CD4-positive, alpha-beta T cell (primary cell): ENCODE measurements at regions of chr1 and their contacts with region 1.

Region 1: GRCh38 chr1:198699167-198700015 is 60.6 kb downstream of the PTPRC start:
- DNase-seq: peak; percentile 54 to 83 (median 68)
- ATAC-seq: peak; percentile 88
- H3K4me3 ChIP-seq: no peak overlapping the region
- H3K4me3 Mint-ChIP-seq: peak overlapping the region; percentile 66
- H3K27ac ChIP-seq: peak overlapping the region in 1 of 2 donors; percentile 46
- H3K27ac Mint-ChIP-seq: peak overlapping the region; percentile 85
- H3K4me1 ChIP-seq: peaks cover 36% of the 10 kb centered on the region
- H3K4me1 Mint-ChIP-seq: peaks cover 88% of the 10 kb centered on the region
- H3K27me3 ChIP-seq: no peaks in the 10 kb centered on the region
- H3K27me3 Mint-ChIP-seq: no peaks in the 10 kb centered on the region
- CTCF ChIP-seq: peak; percentile 70

Region 2: DNA sequence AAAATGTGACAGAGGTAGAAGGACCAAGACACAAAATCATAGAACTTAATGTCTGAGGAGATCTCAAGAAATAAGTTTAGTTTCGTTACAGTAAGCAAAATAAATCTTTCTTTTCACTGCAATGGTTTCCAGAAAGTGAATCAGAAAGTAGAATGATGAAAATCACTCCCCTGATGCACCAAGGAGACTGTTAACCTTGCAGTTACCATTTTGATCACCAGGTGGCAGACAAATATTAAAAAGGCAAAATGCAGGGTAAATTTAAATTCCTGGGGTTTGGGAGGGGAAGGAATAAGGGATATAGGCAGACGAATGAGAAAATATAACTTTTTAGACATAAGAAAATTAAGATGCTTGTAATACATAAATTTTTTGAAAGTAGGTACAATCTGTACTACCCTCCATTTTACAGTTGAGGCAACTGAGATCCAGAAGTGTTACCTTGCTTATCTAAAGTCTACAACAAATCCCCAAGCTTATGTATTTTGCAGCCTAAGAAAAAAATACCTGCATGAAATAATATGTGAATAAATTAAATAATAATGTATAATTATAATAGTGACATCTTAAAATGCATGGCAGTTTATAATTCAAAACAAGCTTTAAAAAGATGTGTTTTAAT is 1178.2 kb before region 1 on chr1:
- CTCF ChIA-PET with region 1: no interaction called
- POLR2A ChIA-PET with region 1: no interaction called
- intact Hi-C with region 1: loop called (anchors 10 kb)
- DNase-seq: peak in 4 of 14 experiments; percentile 5 to 57 (median 50)
- ATAC-seq: peak; percentile 52
- H3K4me3 ChIP-seq: no peak overlapping the region
- H3K4me3 Mint-ChIP-seq: no peak overlapping the region
- H3K27ac ChIP-seq: no peak overlapping the region
- H3K27ac Mint-ChIP-seq: no peak overlapping the region
- H3K4me1 ChIP-seq: no peaks in the 10 kb centered on the region
- H3K4me1 Mint-ChIP-seq: no peaks in the 10 kb centered on the region
- H3K27me3 ChIP-seq: no peaks in the 10 kb centered on the region
- H3K27me3 Mint-ChIP-seq: no peaks in the 10 kb centered on the region
- CTCF ChIP-seq: peak; percentile 85

Region 3: DNA sequence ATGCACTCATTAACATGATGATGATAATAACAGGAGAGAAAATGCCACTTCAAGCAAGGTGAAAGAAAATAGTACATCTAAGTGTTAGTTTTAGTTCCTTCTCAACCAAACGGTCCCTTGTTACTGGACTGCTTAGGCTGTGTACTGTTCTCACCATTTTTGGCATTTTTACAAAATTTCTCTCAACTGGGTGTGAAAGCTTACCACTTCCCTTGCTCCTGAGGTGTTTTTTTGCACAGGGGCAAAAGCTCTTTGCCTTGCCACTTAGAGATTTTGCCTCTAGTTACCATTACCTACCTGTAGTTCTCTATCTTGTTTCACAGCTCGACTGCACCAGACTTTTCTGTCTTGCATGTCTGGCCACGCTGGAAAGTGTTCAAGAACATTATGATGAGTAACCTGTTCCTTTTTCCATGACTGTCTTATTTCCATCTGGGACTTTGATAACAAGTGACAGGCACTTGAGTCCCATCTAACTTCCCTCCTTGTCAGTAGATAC is 531.9 kb before region 1 on chr1:
- CTCF ChIA-PET with region 1: no interaction called
- POLR2A ChIA-PET with region 1: no interaction called
- intact Hi-C with region 1: loop called in 1 of 2 experiments (anchors 10 kb)
- DNase-seq: peak in 5 of 14 experiments; percentile 16 to 85 (median 63)
- ATAC-seq: peak; percentile 48
- H3K4me3 ChIP-seq: peak overlapping the region; percentile 24
- H3K4me3 Mint-ChIP-seq: peak overlapping the region; percentile 74
- H3K27ac ChIP-seq: peak overlapping the region; percentile 57 to 79
- H3K27ac Mint-ChIP-seq: peak overlapping the region; percentile 88
- H3K4me1 ChIP-seq: peaks cover 64% of the 10 kb centered on the region
- H3K4me1 Mint-ChIP-seq: peaks cover 91% of the 10 kb centered on the region
- H3K27me3 ChIP-seq: no peaks in the 10 kb centered on the region
- H3K27me3 Mint-ChIP-seq: no peaks in the 10 kb centered on the region
- CTCF ChIP-seq: no peak

Region 4: DNA sequence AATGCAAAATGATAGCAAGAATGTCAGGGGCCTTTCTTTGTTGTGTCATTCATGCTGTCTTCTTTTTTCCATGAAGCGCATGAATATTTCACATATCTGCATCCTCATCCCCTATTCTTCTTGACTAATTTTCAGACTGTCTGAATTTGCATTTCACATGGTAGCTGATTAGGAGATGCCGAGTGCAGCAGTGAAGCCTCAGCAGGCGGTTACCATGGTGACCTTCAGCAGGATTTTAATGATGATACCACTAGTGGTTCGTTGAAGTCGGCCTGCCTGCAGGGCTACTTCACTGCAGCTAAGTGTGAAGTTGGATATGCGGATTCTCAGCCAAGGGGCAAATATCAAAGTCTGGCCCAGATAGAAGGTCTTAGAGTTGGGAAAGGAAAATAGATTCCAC is 400.8 kb before region 1 on chr1:
- CTCF ChIA-PET with region 1: no interaction called
- POLR2A ChIA-PET with region 1: no interaction called
- intact Hi-C with region 1: loop called in 1 of 2 experiments (anchors 10 kb)
- DNase-seq: no peak
- ATAC-seq: no peak
- H3K4me3 ChIP-seq: no peak overlapping the region
- H3K4me3 Mint-ChIP-seq: no peak overlapping the region
- H3K27ac ChIP-seq: no peak overlapping the region
- H3K27ac Mint-ChIP-seq: no peak overlapping the region
- H3K4me1 ChIP-seq: no peaks in the 10 kb centered on the region
- H3K4me1 Mint-ChIP-seq: no peaks in the 10 kb centered on the region
- H3K27me3 ChIP-seq: no peaks in the 10 kb centered on the region
- H3K27me3 Mint-ChIP-seq: no peaks in the 10 kb centered on the region
- CTCF ChIP-seq: no peak

Region 5: DNA sequence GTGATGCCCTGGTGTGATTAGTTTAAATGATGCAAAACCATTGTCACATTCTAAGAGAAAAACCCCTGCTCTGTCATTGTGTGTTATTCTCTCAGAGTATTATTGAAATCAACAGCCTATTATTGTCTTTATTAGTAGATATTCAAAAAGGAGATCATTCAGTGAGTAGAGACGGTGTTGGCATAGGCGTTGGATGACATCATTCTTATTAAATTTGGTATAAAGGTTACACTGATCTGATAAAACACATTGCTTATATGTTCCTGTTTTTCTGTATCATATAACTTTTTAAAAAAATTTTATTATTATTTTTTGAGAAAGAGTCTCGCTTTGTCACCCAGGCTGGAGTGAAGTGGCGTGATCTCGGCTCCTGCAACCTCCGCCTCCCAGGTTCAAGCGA is 20.6 kb after region 1 on chr1:
- CTCF ChIA-PET with region 1: interaction called, 3 read pairs
- POLR2A ChIA-PET with region 1: interaction called, 4 read pairs
- intact Hi-C with region 1: loop called in 1 of 2 experiments (anchors 2 kb)
- DNase-seq: no peak
- ATAC-seq: no peak
- H3K4me3 ChIP-seq: no peak overlapping the region
- H3K4me3 Mint-ChIP-seq: peak overlapping the region; percentile 15
- H3K27ac ChIP-seq: no peak overlapping the region
- H3K27ac Mint-ChIP-seq: peak overlapping the region; percentile 51
- H3K4me1 ChIP-seq: peaks cover 13% of the 10 kb centered on the region
- H3K4me1 Mint-ChIP-seq: peaks cover 64% of the 10 kb centered on the region
- H3K27me3 ChIP-seq: no peaks in the 10 kb centered on the region
- H3K27me3 Mint-ChIP-seq: no peaks in the 10 kb centered on the region
- CTCF ChIP-seq: no peak

Region 6: DNA sequence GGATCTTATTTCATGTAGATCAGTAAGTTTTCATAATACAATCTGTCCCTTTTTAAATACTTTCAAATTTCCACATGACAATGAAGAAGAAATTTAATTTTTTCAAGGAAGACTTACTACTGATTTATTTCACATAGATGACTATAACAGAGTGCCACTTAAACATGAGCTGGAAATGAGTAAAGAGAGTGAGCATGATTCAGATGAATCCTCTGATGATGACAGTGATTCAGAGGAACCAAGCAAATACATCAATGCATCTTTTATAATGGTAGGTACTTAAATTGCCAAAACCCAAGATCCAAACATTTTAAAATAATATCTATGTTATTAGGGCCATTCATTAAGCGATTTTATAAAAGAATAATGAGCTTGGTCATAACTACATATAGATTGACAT is 49.9 kb after region 1 on chr1:
- CTCF ChIA-PET with region 1: no interaction called
- POLR2A ChIA-PET with region 1: interaction called, 4 read pairs
- intact Hi-C with region 1: loop called in 1 of 2 experiments (anchors 5 kb)
- DNase-seq: no peak
- ATAC-seq: no peak
- H3K4me3 ChIP-seq: no peak overlapping the region
- H3K4me3 Mint-ChIP-seq: no peak overlapping the region
- H3K27ac ChIP-seq: no peak overlapping the region
- H3K27ac Mint-ChIP-seq: peak overlapping the region; percentile 50
- H3K4me1 ChIP-seq: peaks cover 2% of the 10 kb centered on the region
- H3K4me1 Mint-ChIP-seq: peaks cover 18% of the 10 kb centered on the region
- H3K27me3 ChIP-seq: no peaks in the 10 kb centered on the region
- H3K27me3 Mint-ChIP-seq: no peaks in the 10 kb centered on the region
- CTCF ChIP-seq: no peak

Region 7: GRCh38 chr1:199336745-199337640 is 637.6 kb after region 1 on chr1:
- CTCF ChIA-PET with region 1: no interaction called
- POLR2A ChIA-PET with region 1: no interaction called
- intact Hi-C with region 1: no loop called
- DNase-seq: no peak
- ATAC-seq: no peak
- H3K4me3 ChIP-seq: no peak overlapping the region
- H3K4me3 Mint-ChIP-seq: no peak overlapping the region
- H3K27ac ChIP-seq: no peak overlapping the region
- H3K27ac Mint-ChIP-seq: no peak overlapping the region
- H3K4me1 ChIP-seq: no peaks in the 10 kb centered on the region
- H3K4me1 Mint-ChIP-seq: no peaks in the 10 kb centered on the region
- H3K27me3 ChIP-seq: peaks cover 0 to 6% of the 10 kb centered on the region in 2 experiments
- H3K27me3 Mint-ChIP-seq: peaks cover 24% of the 10 kb centered on the region
- CTCF ChIP-seq: no peak

Region 8: GRCh38 chr1:200448034-200448762 is 1748.8 kb after region 1 on chr1:
- CTCF ChIA-PET with region 1: no interaction called
- POLR2A ChIA-PET with region 1: no interaction called
- intact Hi-C with region 1: no loop called
- DNase-seq: no peak
- ATAC-seq: no peak
- H3K4me3 ChIP-seq: no peak overlapping the region
- H3K4me3 Mint-ChIP-seq: no peak overlapping the region
- H3K27ac ChIP-seq: no peak overlapping the region
- H3K27ac Mint-ChIP-seq: no peak overlapping the region
- H3K4me1 ChIP-seq: no peaks in the 10 kb centered on the region
- H3K4me1 Mint-ChIP-seq: no peaks in the 10 kb centered on the region
- H3K27me3 ChIP-seq: no peaks in the 10 kb centered on the region
- H3K27me3 Mint-ChIP-seq: no peaks in the 10 kb centered on the region
- CTCF ChIP-seq: no peak